AG04449 (cell line): ENCODE measurements at regions of chr19 and their contacts with region 1.

Region 1: GRCh38 chr19:47514869-47515588 is at the start of gene NAPA:
- DNase-seq: peak; percentile 98
- H3K4me3 ChIP-seq: peak within 1 kb of the TSS; percentile 100
- CTCF ChIP-seq: peak; percentile 82

Region 2: GRCh38 chr19:47324502-47324901 is 190.5 kb before region 1 on chr19:
- CTCF ChIA-PET with region 1: no interaction called
- POLR2A ChIA-PET with region 1: no interaction called
- DNase-seq: no peak
- H3K4me3 ChIP-seq: no peak overlapping the region
- CTCF ChIP-seq: no peak

Region 3: DNA sequence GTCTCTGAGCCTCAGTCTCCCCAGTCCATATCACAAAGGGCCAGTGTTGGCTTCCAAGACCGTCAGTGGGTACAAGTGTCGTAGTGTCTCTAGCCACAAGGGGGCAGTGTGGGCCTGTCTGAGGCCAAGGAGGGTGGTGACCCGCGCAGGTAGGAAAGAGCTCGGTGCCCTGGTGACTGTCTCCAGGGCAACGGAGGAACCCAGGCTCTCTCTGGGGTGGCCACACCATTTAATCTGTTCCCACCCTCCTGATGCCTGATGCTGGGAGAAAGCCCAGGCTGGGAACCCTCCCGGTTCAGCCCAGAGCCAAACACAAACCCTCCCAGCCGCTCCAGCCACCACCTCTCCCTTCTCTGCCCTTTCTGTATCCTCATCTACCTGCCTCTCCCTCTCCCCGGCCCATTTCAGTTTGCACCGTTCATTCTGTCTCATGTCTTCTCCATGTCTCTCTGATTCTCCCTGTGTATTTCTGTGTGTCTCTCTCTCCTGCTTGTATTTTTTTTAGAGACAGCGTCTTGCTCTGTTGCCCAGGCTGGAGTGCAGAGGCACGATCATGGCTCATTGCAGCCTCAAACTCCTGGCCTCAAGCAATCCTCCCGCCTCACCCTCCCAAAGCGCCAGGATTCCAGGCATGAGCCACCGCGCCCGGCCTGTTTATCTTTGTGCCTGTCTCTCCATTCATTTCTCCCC is 78.2 kb before region 1 on chr19:
- CTCF ChIA-PET with region 1: interaction called, 18 read pairs
- POLR2A ChIA-PET with region 1: no interaction called
- DNase-seq: no peak
- H3K4me3 ChIP-seq: no peak overlapping the region
- CTCF ChIP-seq: peak; percentile 87

Region 4: GRCh38 chr19:47499863-47500830 is 14.9 kb before region 1 on chr19:
- CTCF ChIA-PET with region 1: interaction called, 22 read pairs
- POLR2A ChIA-PET with region 1: interaction called, 3 read pairs
- DNase-seq: no peak
- H3K4me3 ChIP-seq: no peak overlapping the region
- CTCF ChIP-seq: no peak

Region 5: GRCh38 chr19:47542030-47542475 is 27.0 kb after region 1 on chr19:
- CTCF ChIA-PET with region 1: interaction called, 12 read pairs
- POLR2A ChIA-PET with region 1: no interaction called
- DNase-seq: no peak
- H3K4me3 ChIP-seq: no peak overlapping the region
- CTCF ChIP-seq: no peak

Region 6: DNA sequence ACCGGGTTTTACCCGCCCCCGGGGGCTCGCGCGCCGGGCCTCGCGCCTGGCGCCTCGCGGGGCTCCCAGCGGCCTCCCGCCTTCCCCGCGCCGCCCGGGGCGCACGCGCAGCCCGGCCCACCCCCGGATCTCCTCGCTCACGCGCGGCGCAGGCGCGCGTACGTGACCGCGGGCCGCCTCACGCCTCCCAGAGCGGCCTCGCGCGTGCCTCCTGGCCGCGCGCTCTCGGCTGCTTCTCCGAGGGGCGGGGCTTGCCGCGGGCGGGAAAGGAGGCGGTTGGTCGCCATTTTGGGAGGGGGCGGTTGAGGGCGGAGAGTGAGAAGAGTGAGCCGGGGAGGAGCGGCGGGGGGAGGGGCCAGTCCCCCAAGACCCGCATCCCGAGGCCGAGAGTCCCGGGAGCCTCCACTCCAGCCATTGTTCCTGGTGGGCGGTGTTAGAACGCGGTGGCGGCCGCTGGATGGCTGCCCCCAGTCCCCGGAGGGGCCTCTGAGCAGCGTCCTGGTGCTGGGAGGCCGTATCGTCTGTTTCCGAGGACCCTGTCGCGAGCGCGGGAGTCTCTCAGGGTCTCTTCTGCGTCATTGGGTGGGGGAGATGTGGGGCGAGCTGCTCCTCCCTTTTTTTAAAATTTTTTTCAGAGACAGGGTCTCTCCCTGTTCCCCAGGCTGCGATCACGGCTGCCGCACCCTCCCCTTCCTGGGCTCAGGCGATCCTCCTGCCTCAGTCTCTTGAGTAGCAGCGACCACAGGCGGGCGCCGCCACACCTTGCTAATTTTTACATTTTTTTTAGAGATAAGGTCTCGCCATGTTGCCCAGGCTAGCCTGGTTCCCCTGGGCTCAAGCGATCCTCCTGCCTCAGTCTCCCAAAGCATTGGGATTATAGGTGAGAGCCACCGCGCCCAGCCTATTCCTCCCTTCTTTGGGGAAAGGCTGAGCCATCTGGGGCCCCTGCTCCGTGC is 58.3 kb after region 1 on chr19 and contains the start of gene ZNF541:
- CTCF ChIA-PET with region 1: no interaction called
- POLR2A ChIA-PET with region 1: no interaction called
- DNase-seq: no peak
- H3K4me3 ChIP-seq: peak within 1 kb of the TSS; percentile 37
- CTCF ChIP-seq: no peak

Region 7: DNA sequence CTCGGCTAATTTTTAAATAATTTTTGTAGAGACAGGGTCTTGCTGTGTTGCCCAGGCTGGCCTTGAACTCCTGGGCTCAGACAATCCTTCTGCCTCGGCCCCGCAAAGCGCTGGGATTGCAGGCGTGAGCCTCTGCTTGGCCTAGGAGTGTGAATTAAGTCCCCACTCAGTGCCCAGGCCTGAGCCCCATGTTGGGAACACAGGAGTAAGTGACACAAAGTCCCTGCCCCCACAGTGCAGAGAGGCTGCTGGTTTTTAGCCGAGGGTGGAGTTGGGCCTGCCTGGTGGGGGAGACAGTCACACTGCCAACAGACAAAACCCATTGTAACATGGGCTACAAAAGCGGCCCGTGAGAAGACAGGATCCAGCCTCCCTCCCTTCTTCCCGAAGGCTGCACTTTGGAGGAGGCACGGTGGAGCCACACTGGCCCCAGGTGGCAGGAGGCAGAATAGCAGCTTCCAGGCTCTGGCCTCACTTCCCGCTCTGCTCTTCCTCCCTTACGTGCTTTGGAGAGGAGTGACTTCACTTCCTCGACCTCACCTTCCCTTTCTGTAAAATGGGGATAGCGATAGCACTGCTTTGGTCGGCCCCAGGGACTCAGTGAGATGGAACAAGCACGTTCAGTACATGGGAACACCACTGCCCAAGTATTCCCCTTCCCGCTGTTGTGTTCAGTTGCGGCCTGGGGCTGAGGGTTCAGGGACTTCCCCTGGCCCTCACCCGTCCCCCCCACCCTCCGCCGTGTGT is 183.0 kb after region 1 on chr19:
- CTCF ChIA-PET with region 1: interaction called, 28 read pairs
- POLR2A ChIA-PET with region 1: no interaction called
- DNase-seq: no peak
- H3K4me3 ChIP-seq: no peak overlapping the region
- CTCF ChIP-seq: peak; percentile 99